MCF 10A (cell line): ENCODE measurements at regions of chr12 and their contacts with region 1.

Region 1: DNA sequence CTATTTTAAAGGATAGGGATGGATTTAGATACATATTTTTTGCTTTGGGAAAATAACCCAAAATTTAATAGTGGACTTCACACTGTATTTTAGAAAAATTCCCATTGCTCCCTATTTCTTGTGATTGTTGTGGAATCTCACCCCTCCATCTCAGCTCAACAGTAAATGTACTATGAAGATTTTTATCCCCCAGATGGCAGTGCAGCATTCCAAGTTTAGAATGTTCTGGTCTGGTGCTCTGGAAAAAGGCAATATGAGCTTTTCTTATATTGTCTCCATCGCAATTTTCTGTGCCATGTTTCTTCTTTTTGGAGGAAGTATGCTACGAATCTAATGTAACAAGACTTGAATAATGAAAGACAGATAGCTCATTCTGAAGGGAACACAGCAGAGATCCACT is 471.7 kb upstream of the SYT1 start:
- DNase-seq: peak; percentile 38
- H3K4me3 Mint-ChIP-seq: no peak overlapping the region
- H3K27ac Mint-ChIP-seq: no peak overlapping the region
- H3K4me1 Mint-ChIP-seq: no peaks in the 10 kb centered on the region
- H3K27me3 Mint-ChIP-seq: no peaks in the 10 kb centered on the region
- CTCF ChIP-seq: peak; percentile 19

Region 2: GRCh38 chr12:79174626-79175025 is 781.7 kb after region 1 on chr12:
- CTCF ChIA-PET with region 1: interaction called, 7 read pairs
- POLR2A ChIA-PET with region 1: no interaction called
- intact Hi-C with region 1: loop called (anchors 2 kb)
- DNase-seq: peak; percentile 50
- H3K4me3 Mint-ChIP-seq: no peak overlapping the region
- H3K27ac Mint-ChIP-seq: no peak overlapping the region
- H3K4me1 Mint-ChIP-seq: no peaks in the 10 kb centered on the region
- H3K27me3 Mint-ChIP-seq: no peaks in the 10 kb centered on the region
- CTCF ChIP-seq: peak; percentile 49